ENCODE measurements at regions of chr20 and their contacts with region 1.

Region 1: DNA sequence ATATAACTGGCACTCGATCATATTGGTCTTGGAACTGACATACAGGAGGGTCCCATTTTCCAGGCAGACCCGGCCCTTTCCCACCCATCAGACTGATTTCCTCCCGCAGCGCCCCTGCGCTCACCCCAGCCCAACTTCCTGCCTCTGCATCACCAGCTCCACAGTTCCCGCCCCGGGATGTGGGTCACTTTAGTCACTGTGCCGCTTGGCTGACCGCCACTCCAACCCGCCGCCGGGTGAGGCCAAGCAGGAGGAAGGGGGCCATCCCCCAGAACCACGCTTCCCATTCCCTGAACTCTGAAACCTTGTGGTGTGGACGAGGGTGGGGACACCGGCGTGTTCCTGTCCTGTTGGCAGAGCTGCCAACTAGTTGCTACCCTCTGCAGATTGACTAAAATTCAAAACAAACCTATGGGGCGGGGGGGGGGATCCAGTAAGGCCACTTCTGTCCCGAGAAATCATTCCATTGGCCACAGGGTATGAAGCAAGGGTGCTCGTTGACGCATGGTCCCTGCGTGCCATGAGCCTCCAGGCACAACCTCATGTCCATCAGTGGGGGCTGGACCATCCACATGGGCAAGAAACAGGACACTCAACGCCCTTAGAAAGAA is 12.3 kb downstream of the TGM2 start:
- DNase-seq: peak; percentile 98
- H3K4me3 Mint-ChIP-seq: peak overlapping the region; percentile 61
- H3K27ac Mint-ChIP-seq: peak overlapping the region; percentile 88
- H3K4me1 Mint-ChIP-seq: peaks cover 68% of the 10 kb centered on the region
- H3K27me3 Mint-ChIP-seq: no peaks in the 10 kb centered on the region
- CTCF ChIP-seq: no peak

Region 2: DNA sequence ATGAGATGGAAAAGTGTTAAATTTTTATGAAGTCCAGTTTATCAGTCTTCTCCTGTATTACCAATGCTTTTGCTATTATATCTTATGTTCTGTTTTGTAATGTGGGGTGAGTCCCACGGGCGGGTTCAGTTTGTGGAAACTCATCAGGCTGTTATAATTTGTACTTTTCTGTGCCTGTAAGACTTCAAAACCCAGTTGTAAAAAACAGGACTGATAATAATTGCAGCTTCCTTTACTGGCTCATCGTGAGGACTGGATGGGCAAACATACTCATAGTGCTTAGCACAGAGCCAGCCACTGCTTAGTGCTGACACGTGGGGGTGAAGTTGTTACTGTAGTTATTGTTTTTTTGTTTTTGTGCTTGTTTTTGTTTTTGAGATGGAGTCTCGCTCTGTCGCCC is 33.3 kb before region 1 on chr20:
- CTCF ChIA-PET with region 1: interaction called, 11 read pairs
- intact Hi-C with region 1: no loop called
- DNase-seq: no peak
- H3K4me3 Mint-ChIP-seq: no peak overlapping the region
- H3K27ac Mint-ChIP-seq: no peak overlapping the region
- H3K4me1 Mint-ChIP-seq: peaks cover 36% of the 10 kb centered on the region
- H3K27me3 Mint-ChIP-seq: no peaks in the 10 kb centered on the region
- CTCF ChIP-seq: no peak

Region 3: DNA sequence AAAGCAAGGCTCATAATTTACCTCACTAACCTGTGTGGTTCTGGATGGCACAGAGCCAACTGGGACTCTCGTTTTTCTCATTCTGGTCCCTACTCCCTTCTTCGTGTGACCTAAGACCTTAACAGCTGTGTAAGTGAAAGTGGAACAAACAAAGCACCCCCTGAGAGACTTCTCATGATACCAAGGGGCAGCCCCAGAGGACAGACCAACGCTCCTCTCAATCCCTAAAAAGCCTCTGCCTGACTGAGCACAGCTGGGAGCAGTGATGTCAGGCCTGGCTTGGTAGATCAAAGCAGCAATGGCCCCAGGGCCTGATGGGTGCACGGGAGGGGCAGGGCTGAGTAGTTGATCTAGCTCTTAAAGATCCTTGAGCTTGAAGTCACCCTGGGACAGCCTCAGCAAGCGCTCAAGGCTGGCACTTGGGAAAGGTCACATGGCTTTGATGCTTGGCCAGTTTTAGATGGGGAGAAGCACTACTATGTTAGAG is 28.5 kb after region 1 on chr20:
- CTCF ChIA-PET with region 1: no interaction called
- intact Hi-C with region 1: no loop called
- DNase-seq: no peak
- H3K4me3 Mint-ChIP-seq: no peak overlapping the region
- H3K27ac Mint-ChIP-seq: no peak overlapping the region
- H3K4me1 Mint-ChIP-seq: peaks cover 7% of the 10 kb centered on the region
- H3K27me3 Mint-ChIP-seq: no peaks in the 10 kb centered on the region
- CTCF ChIP-seq: no peak

Measured in Calu3 (cell line).